A673 (cell line): ENCODE measurements at regions of chr11 and their contacts with region 1.

Region 1: DNA sequence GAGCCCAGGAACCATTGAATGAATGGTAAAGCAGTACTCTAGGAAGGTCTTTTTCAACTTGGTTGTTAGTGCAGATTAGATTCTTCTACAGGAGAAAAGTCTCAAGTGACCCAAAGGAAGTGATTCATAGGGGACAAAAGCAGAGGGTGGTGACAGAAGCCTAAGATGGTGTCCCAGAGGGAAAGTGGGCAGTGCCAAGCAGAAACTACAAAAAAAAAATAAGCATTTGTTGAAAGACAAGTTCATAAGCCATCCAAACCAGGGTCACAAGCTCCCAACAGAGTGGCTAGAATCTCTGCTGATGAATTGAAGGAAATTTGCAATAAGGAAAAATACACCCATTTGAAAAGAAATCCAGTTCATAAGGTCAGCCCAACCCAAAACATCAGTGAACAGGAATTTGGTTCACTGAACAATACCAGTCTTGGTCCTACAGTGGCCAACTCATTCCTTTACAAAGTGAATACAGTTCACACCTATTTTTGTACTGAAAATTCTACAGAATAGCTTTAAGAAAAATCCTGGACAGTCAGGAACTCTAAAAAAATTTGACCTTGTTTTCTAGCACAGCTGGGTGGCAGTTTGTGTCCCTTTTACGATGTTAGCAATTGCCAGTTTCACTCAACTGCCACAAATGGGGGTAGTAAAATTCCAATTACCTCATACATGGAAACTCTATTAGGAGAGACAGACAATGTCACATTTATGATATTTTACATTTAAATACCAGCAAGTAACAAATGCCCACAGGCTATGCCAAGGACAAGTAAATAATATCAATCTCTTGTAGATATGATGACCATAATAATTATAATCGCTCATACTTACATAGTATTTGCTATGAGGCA is 21.6 kb upstream of the NUP160 start:
- DNase-seq: peak; percentile 62
- H3K4me3 ChIP-seq: no peak overlapping the region
- H3K27ac ChIP-seq: no peak overlapping the region
- H3K4me1 ChIP-seq: peaks cover 14% of the 10 kb centered on the region
- H3K27me3 ChIP-seq: no peaks in the 10 kb centered on the region
- CTCF ChIP-seq: no peak

Region 2: DNA sequence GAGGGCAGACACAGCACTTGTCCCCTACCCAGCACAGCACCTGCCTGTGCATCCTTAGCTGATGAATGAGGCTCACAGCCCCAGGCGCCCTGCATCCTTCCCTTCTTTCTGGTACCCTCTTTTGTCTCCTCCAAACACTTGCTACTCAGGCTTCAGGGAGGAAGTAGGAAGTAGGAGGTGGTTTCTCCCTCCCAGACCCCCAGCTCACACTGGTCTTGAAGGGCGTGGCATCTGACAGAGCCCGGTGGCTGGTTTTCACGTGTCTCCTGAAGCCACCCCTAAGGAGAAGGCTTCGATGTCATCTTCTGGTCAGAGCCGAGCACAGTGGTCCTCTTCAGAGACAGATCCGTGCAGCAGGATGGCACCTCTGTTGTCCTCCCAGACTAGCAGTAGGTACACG is 220.4 kb after region 1 on chr11:
- CTCF ChIA-PET with region 1: no interaction called
- POLR2A ChIA-PET with region 1: interaction called, 17 read pairs
- intact Hi-C with region 1: no loop called
- DNase-seq: no peak
- H3K4me3 ChIP-seq: no peak overlapping the region
- H3K27ac ChIP-seq: no peak overlapping the region
- H3K4me1 ChIP-seq: peaks cover 42% of the 10 kb centered on the region
- H3K27me3 ChIP-seq: no peaks in the 10 kb centered on the region
- CTCF ChIP-seq: no peak